Activated naive CD4-positive, alpha-beta T cell treated with anti-CD3 and anti-CD28 coated beads for 36 hours (primary cell): ENCODE measurements at regions of chr6 and their contacts with region 1.

Region 1: GRCh38 chr6:127554435-127555006 is 22.5 kb upstream of the C6orf58 start:
- DNase-seq: peak; percentile 57
- H3K4me3 Mint-ChIP-seq: no peak overlapping the region
- H3K27ac Mint-ChIP-seq: no peak overlapping the region
- H3K4me1 Mint-ChIP-seq: no peaks in the 10 kb centered on the region
- H3K27me3 Mint-ChIP-seq: peaks cover 14% of the 10 kb centered on the region

Region 2: GRCh38 chr6:127328043-127328609 is 226.4 kb before region 1 on chr6:
- CTCF ChIA-PET with region 1: no interaction called
- intact Hi-C with region 1: no loop called
- DNase-seq: no peak
- H3K4me3 Mint-ChIP-seq: no peak overlapping the region
- H3K27ac Mint-ChIP-seq: no peak overlapping the region
- H3K4me1 Mint-ChIP-seq: peaks cover 5% of the 10 kb centered on the region
- H3K27me3 Mint-ChIP-seq: no peaks in the 10 kb centered on the region

Region 3: GRCh38 chr6:127641905-127642304 is 87.4 kb after region 1 on chr6:
- CTCF ChIA-PET with region 1: no interaction called
- intact Hi-C with region 1: loop called (anchors 1 kb)
- DNase-seq: peak; percentile 8
- H3K4me3 Mint-ChIP-seq: no peak overlapping the region
- H3K27ac Mint-ChIP-seq: no peak overlapping the region
- H3K4me1 Mint-ChIP-seq: no peaks in the 10 kb centered on the region
- H3K27me3 Mint-ChIP-seq: peaks cover 2% of the 10 kb centered on the region

Region 4: GRCh38 chr6:128327890-128328289 is 773.4 kb after region 1 on chr6:
- CTCF ChIA-PET with region 1: no interaction called
- intact Hi-C with region 1: loop called (anchors 5 kb)
- DNase-seq: peak; percentile 30
- H3K4me3 Mint-ChIP-seq: no peak overlapping the region
- H3K27ac Mint-ChIP-seq: no peak overlapping the region
- H3K4me1 Mint-ChIP-seq: no peaks in the 10 kb centered on the region
- H3K27me3 Mint-ChIP-seq: no peaks in the 10 kb centered on the region

Region 5: GRCh38 chr6:128731249-128732165 is 1177.0 kb after region 1 on chr6:
- CTCF ChIA-PET with region 1: no interaction called
- intact Hi-C with region 1: loop called (anchors 5 kb)
- DNase-seq: peak; percentile 10
- H3K4me3 Mint-ChIP-seq: no peak overlapping the region
- H3K27ac Mint-ChIP-seq: no peak overlapping the region
- H3K4me1 Mint-ChIP-seq: no peaks in the 10 kb centered on the region
- H3K27me3 Mint-ChIP-seq: peaks cover 17% of the 10 kb centered on the region